ENCODE measurements at regions of chr6 and their contacts with region 1.

Region 1: GRCh38 chr6:15691250-15691869 is 28.5 kb upstream of the DTNBP1 start:
- DNase-seq: peak; percentile 76
- H3K4me3 Mint-ChIP-seq: no peak overlapping the region
- H3K27ac Mint-ChIP-seq: no peak overlapping the region
- H3K4me1 Mint-ChIP-seq: peaks cover 16% of the 10 kb centered on the region
- H3K27me3 Mint-ChIP-seq: peaks cover 7% of the 10 kb centered on the region

Region 2: DNA sequence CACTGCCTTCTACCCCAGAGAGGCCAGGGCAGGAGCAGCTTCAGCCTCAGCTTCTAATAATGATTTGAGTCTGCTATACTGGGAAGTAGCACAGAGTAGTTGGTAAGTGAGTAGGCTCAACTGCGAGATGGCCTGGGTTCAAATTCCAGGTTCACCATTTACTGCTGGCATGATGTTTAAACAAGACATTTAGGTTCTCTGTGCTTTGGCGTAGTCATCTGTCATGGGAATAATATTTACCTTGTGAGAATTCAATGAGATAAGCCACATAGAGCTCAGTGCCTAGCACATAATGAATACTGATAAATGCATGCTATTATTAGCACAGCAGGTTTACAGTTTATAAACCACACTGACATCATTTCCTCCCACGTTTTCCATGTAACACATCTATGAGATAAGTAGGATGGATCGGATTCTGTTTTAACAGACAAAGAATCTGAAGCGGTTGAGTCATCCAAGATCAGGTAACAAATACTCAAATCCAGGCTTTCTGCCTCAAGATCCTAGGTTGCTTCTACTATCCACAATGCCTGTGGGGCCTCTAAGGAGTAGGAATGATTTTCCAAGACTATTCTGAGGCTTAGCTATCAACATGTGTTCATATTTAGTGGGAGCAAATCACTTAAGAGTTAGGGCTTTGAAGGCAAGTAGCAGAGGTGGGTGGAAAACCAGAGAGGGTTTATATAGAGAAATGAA is 44.4 kb after region 1 on chr6:
- intact Hi-C with region 1: loop called (anchors 2 kb)
- DNase-seq: no peak
- H3K4me3 Mint-ChIP-seq: peak overlapping the region; percentile 6
- H3K27ac Mint-ChIP-seq: peak overlapping the region; percentile 78
- H3K4me1 Mint-ChIP-seq: peaks cover 38% of the 10 kb centered on the region
- H3K27me3 Mint-ChIP-seq: peaks cover 2% of the 10 kb centered on the region

Region 3: DNA sequence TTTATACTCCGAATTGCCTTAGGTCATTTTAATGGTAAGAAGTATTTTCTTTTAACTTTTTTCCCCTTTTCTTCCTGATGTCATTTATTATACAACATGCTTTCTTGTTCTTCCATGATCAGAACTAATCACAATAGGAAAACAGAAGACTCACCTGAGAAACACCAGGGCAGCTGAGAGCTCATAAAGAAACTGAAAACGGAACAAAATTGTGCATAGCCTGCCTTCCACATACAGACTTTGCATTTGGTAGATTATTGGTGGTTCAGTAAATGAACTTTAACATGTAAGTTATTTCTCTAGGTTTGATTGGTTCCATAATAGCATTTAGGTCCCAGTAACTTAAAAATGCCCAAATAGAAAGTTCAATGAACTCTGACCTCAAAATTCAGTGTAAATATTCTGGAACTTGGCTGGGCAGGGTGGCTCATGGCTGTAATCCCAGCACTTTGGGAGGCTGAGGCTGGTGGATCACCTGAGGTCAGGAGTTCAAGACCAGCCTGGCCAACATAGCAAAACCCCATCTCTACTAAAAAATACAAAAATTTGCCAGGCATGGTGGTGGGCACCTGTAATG is 132.6 kb after region 1 on chr6:
- intact Hi-C with region 1: loop called (anchors 5 kb)
- DNase-seq: no peak
- H3K4me3 Mint-ChIP-seq: no peak overlapping the region
- H3K27ac Mint-ChIP-seq: no peak overlapping the region
- H3K4me1 Mint-ChIP-seq: peaks cover 5% of the 10 kb centered on the region
- H3K27me3 Mint-ChIP-seq: peaks cover 15% of the 10 kb centered on the region

Region 4: DNA sequence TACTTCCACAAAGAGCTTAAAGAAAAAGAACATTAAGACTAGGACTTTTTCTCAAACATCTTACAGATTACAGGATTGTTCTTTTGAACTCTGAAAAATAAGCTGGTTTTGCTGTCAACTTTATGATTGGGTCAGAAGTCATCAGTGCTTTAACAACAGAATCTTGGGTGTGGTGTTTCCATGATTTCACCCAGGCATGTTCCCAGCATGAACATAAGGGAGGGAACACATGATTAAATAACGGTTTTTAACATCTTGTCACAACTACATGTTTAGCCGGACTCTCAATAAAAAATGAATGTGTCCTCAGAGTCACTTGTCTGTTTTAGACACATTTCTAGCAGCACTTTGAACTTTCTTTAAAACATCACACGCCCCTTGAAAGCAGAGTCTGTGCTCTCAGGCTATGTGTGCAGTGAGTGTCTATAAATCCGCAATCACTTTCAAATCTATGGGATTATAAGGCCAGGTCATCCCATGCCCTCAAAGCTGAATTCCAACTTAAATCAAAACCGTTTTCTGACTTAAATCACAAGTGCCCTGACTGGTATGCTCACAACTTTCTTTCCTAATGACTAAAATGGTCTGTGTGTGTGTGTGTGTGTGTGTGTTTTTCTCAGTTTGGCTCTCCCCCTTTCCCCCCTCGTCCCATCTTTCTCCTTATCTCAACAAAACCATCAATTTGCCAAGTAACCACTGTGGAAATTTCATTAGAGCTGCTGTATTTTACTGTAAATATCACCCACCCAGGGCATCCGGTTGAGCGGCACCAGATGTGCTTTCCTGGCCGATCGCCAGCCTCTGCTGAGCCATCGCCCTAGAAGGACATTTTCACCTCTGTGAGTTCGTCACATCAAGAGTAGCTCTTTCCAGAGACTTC is 188.3 kb after region 1 on chr6:
- intact Hi-C with region 1: loop called (anchors 1 kb)
- DNase-seq: no peak
- H3K4me3 Mint-ChIP-seq: peak overlapping the region; percentile 53
- H3K27ac Mint-ChIP-seq: peak overlapping the region; percentile 63
- H3K4me1 Mint-ChIP-seq: peaks cover 34% of the 10 kb centered on the region
- H3K27me3 Mint-ChIP-seq: no peaks in the 10 kb centered on the region

Region 5: GRCh38 chr6:15987569-15987968 is 296.2 kb after region 1 on chr6:
- intact Hi-C with region 1: loop called (anchors 5 kb)
- DNase-seq: no peak
- H3K4me3 Mint-ChIP-seq: no peak overlapping the region
- H3K27ac Mint-ChIP-seq: no peak overlapping the region
- H3K4me1 Mint-ChIP-seq: peaks cover 28% of the 10 kb centered on the region
- H3K27me3 Mint-ChIP-seq: peaks cover 3% of the 10 kb centered on the region

Region 6: DNA sequence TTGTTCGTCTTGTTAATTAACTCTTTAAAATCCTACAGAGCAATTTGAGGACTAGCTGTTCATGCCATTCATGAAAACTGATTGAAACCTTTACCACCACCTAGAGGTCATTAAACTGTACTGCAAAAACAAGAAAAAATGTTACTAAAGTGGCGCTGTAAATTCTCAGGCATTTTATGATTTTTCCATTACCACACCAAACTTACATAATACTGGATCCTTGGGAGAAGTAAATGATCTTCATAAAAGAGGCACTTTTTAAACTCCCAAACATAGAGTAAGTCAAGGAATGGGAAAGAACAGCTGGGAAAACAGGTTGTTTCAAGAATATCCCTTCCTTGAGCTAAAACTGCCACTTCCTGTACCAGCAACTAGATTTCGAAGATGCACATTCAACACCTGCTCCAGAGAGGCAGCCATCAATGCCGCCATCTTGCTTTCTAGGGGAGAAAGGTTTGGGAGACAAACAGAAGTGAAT is 491.9 kb after region 1 on chr6:
- intact Hi-C with region 1: loop called (anchors 1 kb)
- DNase-seq: no peak
- H3K4me3 Mint-ChIP-seq: peak overlapping the region; percentile 5
- H3K27ac Mint-ChIP-seq: no peak overlapping the region
- H3K4me1 Mint-ChIP-seq: peaks cover 44% of the 10 kb centered on the region
- H3K27me3 Mint-ChIP-seq: peaks cover 13% of the 10 kb centered on the region

Region 7: GRCh38 chr6:16206595-16207037 is 515.3 kb after region 1 on chr6:
- intact Hi-C with region 1: loop called (anchors 1 kb)
- DNase-seq: peak; percentile 22
- H3K4me3 Mint-ChIP-seq: no peak overlapping the region
- H3K27ac Mint-ChIP-seq: no peak overlapping the region
- H3K4me1 Mint-ChIP-seq: peaks cover 6% of the 10 kb centered on the region
- H3K27me3 Mint-ChIP-seq: peaks cover 27% of the 10 kb centered on the region

Measured in activated T-helper 1 cell treated with anti-CD3 and anti-CD28 coated beads, Interleukin-12 subunit alpha, Interleukin-12 subunit beta, Interleukin-2, Interleukin-4 antibody, amounts not matched to agents 30 ng/mL and 10 ng/mL and 1 ng/mL, durations not matched to agents 14 hours and 24 hours and 36 hours (primary cell).